ENCODE measurements at regions of chr15 and their contacts with region 1.

Region 1: DNA sequence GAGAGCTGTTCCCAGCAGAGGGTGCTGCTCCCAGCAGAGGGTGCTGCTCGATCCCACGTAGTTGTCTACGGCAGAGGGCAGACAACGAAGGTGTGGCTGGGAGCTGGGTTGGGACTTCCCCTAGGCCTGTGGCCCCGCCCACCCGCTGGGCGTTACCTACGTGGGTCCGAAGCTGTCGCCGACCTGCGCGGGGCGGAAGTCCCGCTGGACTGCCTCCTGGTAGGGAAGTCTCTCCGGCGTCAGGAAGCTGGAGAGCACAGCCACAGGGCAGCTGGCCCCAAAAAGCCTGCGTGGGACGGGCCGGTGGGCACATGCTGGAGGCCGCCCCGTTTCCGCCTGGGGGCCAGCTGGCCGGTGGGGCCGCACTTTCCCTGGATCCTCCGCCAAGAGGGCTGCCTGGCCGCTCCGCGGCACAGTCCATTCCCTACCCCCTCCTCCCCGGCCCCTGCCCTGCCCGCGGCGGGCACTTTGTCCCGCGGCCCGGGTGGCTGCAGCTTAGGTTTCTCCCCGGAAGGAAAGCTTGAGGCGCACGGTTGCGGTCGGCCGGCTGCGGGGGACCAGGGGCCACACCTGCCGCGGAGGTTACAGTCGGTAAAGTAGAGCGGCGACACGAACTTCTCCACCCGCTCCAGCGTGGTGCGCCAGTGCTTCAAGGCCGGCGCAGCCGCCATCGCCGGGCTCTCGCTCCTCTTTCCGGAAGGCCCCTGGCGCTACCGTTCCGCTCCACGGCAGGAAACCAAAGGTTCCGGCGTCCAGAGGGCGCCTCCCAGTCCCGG is at the start of gene MAN2C1:
- DNase-seq: peak; percentile 99
- H3K4me3 Mint-ChIP-seq: peak within 1 kb of the TSS; percentile 85
- H3K27ac Mint-ChIP-seq: peak within 1 kb of the TSS; percentile 93
- H3K4me1 Mint-ChIP-seq: peaks cover 16% of the 10 kb centered on the region
- H3K27me3 Mint-ChIP-seq: no peaks in the 10 kb centered on the region
- CTCF ChIP-seq: peak; percentile 76
- total RNA-seq, gene MAN2C1: 239 and 243 TPM in 2 replicates

Region 2: GRCh38 chr15:75182187-75183131 is 185.6 kb before region 1 on chr15:
- CTCF ChIA-PET with region 1: no interaction called
- intact Hi-C with region 1: no loop called
- DNase-seq: no peak
- H3K4me3 Mint-ChIP-seq: no peak overlapping the region
- H3K27ac Mint-ChIP-seq: no peak overlapping the region
- H3K4me1 Mint-ChIP-seq: peaks cover 36% of the 10 kb centered on the region
- H3K27me3 Mint-ChIP-seq: no peaks in the 10 kb centered on the region
- CTCF ChIP-seq: no peak

Region 3: GRCh38 chr15:75201609-75202250 is 166.4 kb before region 1 on chr15 and contains the start of gene C15orf39:
- CTCF ChIA-PET with region 1: no interaction called
- intact Hi-C with region 1: no loop called
- DNase-seq: peak; percentile 86
- H3K4me3 Mint-ChIP-seq: peak within 1 kb of the TSS; percentile 94
- H3K27ac Mint-ChIP-seq: peak within 1 kb of the TSS; percentile 79
- H3K4me1 Mint-ChIP-seq: peaks cover 54% of the 10 kb centered on the region
- H3K27me3 Mint-ChIP-seq: no peaks in the 10 kb centered on the region
- CTCF ChIP-seq: peak; percentile 92
- total RNA-seq, gene C15orf39: 77.2 and 86.5 TPM in 2 replicates

Region 4: DNA sequence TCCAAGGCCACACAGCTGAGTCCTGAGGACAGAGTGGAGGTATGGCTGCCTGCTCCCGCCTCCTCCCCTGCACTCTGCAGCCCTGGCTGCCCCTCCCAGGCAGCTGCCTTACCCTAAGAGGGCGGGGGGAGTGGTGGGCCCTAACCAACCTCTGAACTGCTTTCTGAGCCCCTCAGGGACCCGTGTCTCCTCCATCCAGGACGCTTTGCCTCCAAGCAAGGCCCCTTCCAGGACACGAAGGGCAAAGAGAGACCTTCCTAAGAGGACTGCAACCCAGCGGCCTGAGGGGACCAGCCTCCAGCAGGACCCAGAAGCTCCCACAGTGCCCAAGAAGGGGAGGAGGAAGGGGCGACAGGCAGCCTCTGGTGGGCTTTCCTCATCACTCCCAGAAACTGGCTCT is 13.6 kb before region 1 on chr15:
- CTCF ChIA-PET with region 1: interaction called, 11 read pairs
- intact Hi-C with region 1: no loop called
- DNase-seq: no peak
- H3K4me3 Mint-ChIP-seq: no peak overlapping the region
- H3K27ac Mint-ChIP-seq: no peak overlapping the region
- H3K4me1 Mint-ChIP-seq: no peaks in the 10 kb centered on the region
- H3K27me3 Mint-ChIP-seq: no peaks in the 10 kb centered on the region
- CTCF ChIP-seq: no peak

Region 5: DNA sequence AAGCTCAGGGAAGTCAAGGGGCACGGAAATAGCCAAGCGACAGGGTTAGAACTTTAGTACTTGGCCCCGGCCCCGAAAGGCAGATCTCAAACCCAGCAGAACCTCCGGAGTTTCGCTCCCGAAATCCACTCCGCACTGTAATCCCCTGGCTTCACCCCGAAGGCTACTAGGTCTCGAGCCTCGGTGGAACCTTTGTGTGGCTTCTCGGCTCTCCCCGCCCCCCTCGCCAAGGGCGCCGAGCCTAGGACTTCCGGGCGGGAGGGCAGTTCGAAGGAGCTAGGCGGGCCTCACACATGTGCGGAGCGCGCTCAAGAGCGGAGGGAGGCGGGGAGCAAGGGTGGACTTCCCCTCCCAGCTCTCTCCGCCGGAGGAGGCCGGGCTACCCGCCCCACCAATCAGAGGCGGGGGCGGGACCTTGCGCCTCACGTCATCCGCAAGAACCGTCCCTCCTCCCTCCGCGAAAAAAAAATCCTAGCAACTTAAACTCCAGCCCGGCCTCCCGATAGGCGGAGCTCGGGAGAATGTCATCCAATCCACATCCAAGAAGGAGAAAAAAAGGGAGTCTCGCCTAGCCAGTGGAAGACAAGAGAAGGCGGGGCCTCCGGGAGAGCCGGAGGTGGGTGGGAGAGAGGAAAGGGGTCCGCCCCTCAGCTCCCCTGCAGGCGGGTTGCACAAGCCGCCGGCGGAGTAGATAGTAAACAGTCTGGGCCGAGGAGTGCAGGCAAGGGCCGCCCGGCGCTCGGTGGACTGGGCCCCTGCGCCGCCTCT is 85.8 kb after region 1 on chr15:
- CTCF ChIA-PET with region 1: interaction called, 83 read pairs
- intact Hi-C with region 1: loop called (anchors 2 kb)
- DNase-seq: peak; percentile 99
- H3K4me3 Mint-ChIP-seq: peak overlapping the region; percentile 99
- H3K27ac Mint-ChIP-seq: peak overlapping the region; percentile 87
- H3K4me1 Mint-ChIP-seq: peaks cover 17% of the 10 kb centered on the region
- H3K27me3 Mint-ChIP-seq: no peaks in the 10 kb centered on the region
- CTCF ChIP-seq: no peak

Region 6: GRCh38 chr15:75578948-75579920 is 211.1 kb after region 1 on chr15 and contains the start of gene PTPN9:
- CTCF ChIA-PET with region 1: interaction called, 11 read pairs
- intact Hi-C with region 1: no loop called
- DNase-seq: peak; percentile 82
- H3K4me3 Mint-ChIP-seq: peak within 1 kb of the TSS; percentile 86
- H3K27ac Mint-ChIP-seq: peak within 1 kb of the TSS; percentile 75
- H3K4me1 Mint-ChIP-seq: peaks cover under 1% of the 10 kb centered on the region
- H3K27me3 Mint-ChIP-seq: no peaks in the 10 kb centered on the region
- CTCF ChIP-seq: peak; percentile 69
- total RNA-seq, gene PTPN9: 30.8 and 31.1 TPM in 2 replicates

Region 7: DNA sequence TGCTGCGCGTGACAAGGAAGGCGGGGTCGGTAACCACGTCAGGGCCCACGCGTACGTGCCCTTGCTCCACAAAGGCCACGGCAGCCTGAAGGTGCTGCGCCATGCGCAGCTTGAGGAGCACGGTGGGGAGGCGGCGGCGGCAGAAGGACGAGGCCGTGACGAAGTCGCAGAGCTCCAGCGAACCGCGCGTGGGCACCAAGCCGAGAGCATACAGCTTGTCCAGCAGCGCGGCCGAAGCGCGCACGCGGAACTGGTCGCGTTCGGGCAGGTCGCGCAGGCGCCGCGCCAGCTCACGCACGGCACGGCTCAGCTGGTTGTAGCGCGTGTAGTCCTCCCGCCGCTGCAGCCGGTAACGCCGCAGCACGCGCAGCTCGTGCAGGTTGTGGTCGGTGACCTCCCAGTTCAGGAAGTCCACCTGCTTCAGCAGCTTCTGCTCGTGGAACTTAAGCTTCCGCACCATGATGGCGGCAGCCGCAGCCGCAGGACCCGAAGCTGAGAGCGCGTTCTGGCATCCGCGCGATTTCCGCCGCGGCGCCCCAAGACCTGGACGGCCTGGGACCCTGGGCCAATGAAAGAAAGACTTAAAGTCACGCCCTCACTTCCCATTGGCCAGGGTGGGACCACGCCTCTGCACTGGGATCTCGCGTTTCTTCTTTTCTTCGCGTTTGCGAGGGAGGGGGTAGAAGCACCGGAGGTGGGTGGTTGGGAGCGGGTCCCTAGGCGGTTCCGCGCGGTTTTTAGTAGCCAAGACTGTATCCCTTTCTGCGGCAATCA is 271.8 kb after region 1 on chr15 and contains the start of gene IMP3:
- CTCF ChIA-PET with region 1: interaction called, 13 read pairs
- intact Hi-C with region 1: loop called (anchors 10 kb)
- DNase-seq: peak; percentile 97
- H3K4me3 Mint-ChIP-seq: peak within 1 kb of the TSS; percentile 87
- H3K27ac Mint-ChIP-seq: peak within 1 kb of the TSS; percentile 84
- H3K4me1 Mint-ChIP-seq: peaks cover 28% of the 10 kb centered on the region
- H3K27me3 Mint-ChIP-seq: no peaks in the 10 kb centered on the region
- CTCF ChIP-seq: no peak
- total RNA-seq, gene IMP3: 77.8 and 91.5 TPM in 2 replicates